Aorta (tissue), 5 donors: ENCODE measurements at regions of chr18 and their contacts with region 1.

Region 1: GRCh38 chr18:50287441-50288347 is at the start of gene CXXC1:
- DNase-seq: peak; percentile 98 to 99
- ATAC-seq: peak; percentile 96
- H3K4me3 ChIP-seq: peak within 1 kb of the TSS; percentile 57 to 78
- H3K27ac ChIP-seq: peak within 1 kb of the TSS in 1 of 2 donors; percentile 87
- H3K4me1 ChIP-seq: no peaks in the 10 kb centered on the region
- H3K27me3 ChIP-seq: no peaks in the 10 kb centered on the region
- total RNA-seq, gene CXXC1: 54.3 to 74.0 TPM

Region 2: DNA sequence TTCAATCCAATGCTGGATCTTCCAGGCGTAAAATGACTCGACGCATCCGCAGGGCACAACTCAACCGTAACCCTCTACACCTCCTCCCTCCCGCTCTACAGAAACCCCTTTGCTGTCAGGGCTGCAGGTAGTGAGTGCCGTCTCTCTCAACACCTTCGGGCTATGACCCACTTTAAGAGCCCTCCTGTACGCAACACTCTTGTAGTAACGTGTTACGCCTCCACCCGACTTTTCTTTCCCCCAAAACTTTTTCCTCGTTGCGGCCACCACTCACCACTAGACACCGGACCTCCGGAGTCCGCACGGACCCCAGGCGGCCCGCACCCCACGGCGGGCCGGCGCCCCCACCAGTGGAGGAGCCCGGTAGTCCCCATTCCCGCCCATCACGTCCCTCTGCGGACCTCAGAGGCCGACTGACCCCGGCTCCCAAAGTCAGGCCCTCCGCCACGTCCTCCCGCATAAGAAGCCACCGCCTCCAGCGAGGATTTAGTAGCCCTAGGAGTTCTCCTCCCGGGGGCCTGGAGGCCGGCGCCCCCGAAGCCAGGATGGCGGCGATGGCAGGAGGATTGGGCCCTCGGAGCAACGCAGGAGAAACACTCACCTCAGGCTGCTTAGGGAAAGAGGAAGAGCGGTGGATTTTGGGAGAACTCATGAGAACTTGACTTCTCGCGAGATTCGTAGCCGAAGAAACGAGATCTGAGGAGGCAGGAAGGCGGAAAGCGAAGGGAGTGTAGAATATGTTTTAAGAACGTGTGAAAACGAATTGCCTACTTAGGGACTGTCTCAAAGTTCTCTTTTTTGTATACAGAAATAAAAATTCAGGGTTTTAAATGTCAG is 795.6 kb before region 1 on chr18:
- intact Hi-C with region 1: loop called in 1 of 2 experiments (anchors 10 kb)
- DNase-seq: peak; percentile 88 to 93
- ATAC-seq: peak; percentile 97
- H3K4me3 ChIP-seq: peak within 1 kb of the TSS; percentile 40 to 79
- H3K27ac ChIP-seq: peak within 1 kb of the TSS; percentile 28 to 62
- H3K4me1 ChIP-seq: no peaks in the 10 kb centered on the region
- H3K27me3 ChIP-seq: no peaks in the 10 kb centered on the region

Region 3: DNA sequence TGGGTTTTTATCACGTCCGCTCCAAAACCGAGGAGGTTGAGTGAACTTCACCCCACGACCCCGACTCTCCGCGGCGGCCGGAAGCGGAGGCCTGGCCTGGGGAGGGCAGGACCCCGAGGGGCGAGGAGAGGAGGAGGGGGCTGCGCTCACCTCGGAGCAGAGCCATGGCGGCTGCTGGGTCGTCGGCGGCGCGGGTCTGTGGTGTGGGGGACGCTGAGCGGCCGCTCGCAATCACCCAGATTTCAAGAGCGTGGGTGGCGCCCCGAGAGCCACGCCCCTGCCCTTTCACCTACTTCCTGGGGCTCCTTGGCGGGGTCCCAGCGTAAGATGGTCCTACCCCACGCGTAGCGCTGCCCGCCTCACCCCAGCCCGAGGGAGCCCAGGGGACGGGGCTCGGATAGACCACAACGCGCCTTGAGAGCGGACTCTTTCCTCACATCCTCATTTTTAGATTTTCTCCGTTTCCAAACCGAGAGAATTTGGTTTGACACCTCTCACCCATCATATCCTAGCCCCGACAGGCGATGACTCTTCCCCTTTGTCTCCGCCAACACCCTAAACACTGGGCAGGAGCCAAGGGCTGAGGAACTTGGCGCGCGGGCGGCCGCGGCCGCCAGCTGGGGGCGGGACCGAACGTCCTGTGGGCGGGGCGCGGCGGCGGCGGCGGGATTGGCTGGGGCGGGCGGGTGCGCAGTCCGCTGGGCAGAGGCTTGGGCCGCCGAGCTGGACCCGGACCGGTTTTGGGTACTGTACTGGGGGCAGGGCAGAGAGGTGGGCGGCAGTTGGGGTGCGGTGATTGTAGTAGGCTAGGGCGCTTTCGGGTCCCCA is 474.2 kb before region 1 on chr18 and contains the start of gene ACAA2:
- intact Hi-C with region 1: loop called in 1 of 2 experiments (anchors 10 kb)
- DNase-seq: peak; percentile 91 to 96
- ATAC-seq: peak; percentile 97
- H3K4me3 ChIP-seq: peak within 1 kb of the TSS; percentile 38 to 43
- H3K27ac ChIP-seq: peak within 1 kb of the TSS; percentile 58 to 93
- H3K4me1 ChIP-seq: peaks cover 3 to 4% of the 10 kb centered on the region in 2 donors
- H3K27me3 ChIP-seq: no peaks in the 10 kb centered on the region
- total RNA-seq, gene ACAA2: 37.5 to 39.4 TPM

Region 4: DNA sequence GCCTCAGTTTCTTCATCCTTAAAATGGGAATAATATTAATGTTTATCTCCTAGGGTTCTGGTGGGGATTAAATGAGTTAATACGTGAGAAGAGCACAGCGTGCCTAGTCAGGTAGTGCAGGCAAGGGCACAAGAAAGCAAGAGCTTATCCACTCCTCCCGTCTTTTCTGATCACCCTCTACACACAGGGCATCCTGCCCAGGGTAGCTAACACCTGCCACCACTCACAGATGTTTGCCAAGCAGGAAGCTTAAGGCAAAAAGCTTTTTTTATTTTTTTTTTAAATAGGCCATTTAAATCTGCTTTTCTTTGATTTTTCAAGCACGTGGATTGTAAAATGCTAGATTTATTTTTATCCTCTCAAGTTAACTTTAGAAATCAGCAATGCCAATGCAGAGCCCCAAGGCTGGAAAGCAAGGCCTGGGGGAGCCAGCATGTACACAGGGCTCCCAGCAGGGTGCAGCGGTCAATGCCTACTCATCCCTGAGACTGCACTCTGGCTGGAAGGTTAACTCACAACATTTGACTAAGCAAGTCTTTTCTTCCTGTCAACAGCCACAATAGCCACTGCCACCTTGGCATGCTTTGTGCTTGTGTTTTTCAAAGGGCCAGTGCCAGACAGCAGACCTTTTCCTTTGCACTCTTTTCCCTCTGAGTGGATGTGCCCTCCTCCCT is 387.9 kb before region 1 on chr18:
- intact Hi-C with region 1: no loop called
- DNase-seq: no peak
- ATAC-seq: no peak
- H3K4me3 ChIP-seq: no peak overlapping the region
- H3K27ac ChIP-seq: no peak overlapping the region
- H3K4me1 ChIP-seq: no peaks in the 10 kb centered on the region
- H3K27me3 ChIP-seq: no peaks in the 10 kb centered on the region

Region 5: DNA sequence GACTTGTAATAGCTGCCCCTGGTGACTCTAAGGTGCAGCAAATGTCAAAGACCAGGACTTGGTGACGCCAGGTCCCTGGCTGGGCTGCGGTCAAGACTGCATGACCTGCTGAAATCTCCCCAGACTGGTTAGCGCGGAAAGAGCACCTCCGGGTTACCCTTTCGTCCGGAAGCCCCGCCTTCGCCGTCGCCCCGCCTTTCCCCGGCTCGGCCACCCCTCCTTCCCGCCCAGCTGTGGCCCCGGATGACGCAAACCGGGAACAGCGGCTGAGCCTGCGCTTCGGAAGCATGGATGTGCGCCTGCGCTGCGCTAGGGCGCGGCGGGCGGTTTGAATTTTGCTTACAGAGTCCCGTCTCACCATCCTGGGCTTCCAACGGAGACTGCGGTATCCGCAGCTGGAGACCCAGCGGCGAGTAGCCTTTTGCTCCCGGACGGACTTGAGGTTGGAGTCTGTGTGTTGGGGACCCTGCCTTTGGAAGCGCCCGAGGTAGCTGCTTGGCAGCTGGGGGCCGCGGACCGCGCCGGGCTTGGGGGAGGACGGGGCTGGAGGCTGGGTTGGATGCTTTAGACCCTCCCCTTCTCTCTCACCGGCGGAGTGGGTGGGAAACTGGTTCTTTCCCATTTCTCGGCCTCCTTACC is 87.2 kb after region 1 on chr18 and contains the start of gene SKA1:
- intact Hi-C with region 1: loop called (anchors 10 kb)
- DNase-seq: peak; percentile 95 to 97
- ATAC-seq: peak; percentile 100
- H3K4me3 ChIP-seq: peak within 1 kb of the TSS in 1 of 2 donors; percentile 23
- H3K27ac ChIP-seq: no peak within 1 kb of the TSS
- H3K4me1 ChIP-seq: no peaks in the 10 kb centered on the region
- H3K27me3 ChIP-seq: no peaks in the 10 kb centered on the region
- total RNA-seq, gene SKA1: 0.42 to 0.52 TPM

Region 6: GRCh38 chr18:51197661-51198424 is 910.1 kb after region 1 on chr18 and contains the start of gene MEX3C:
- intact Hi-C with region 1: loop called in 1 of 2 experiments (anchors 10 kb)
- DNase-seq: peak; percentile 100
- ATAC-seq: peak; percentile 98
- H3K4me3 ChIP-seq: peak within 1 kb of the TSS; percentile 72 to 74
- H3K27ac ChIP-seq: peak within 1 kb of the TSS; percentile 83 to 97
- H3K4me1 ChIP-seq: no peaks in the 10 kb centered on the region
- H3K27me3 ChIP-seq: no peaks in the 10 kb centered on the region
- total RNA-seq, gene MEX3C: 30.9 to 31.7 TPM